K562 (cell line): ENCODE measurements at regions of chr21 and their contacts with region 1.

Region 1: DNA sequence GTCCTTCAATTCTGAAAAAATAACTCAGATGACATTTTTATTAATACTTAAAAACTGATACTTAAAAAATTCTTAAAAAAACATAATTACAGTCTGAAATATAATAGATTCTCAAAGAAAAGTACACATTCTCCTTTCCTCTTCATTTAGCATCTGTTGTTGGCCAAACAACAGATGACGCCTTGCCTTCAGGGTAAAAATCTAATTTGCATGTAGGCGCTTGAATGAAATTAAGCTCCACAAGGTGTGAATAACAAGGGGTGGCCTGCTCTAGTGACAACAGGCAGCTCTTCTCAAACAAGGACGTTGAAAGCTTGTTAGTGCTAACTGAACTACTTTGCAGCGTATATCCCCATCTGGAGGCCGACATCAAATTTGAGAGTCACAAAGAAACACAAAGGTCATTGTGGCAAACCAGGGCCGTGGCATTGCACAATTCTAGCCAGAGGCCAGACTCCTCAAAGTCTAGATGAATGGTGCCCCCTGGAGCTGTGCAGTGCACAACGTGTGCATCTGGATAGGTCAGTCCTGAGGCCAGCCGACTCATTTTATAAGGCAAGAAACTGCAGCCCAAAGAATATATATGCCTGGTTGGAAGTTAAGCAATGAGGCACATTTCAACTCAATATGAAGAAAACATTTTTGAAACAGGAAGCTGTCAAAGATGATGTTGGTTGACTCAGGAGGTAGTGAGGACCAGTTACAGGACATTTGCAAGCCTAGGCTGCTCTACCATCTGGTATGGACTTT is 459.2 kb upstream of the RUNX1 start:
- DNase-seq: peak; percentile 35 to 84 (median 51)
- ATAC-seq: peak; percentile 96
- H3K4me3 ChIP-seq: no peak overlapping the region
- H3K27ac ChIP-seq: no peak overlapping the region
- H3K4me1 ChIP-seq: peaks cover 3 to 43% of the 10 kb centered on the region in 2 experiments; a peak in 4 of 5 replicates
- H3K27me3 ChIP-seq: no peaks in the 10 kb centered on the region; a peak in 1 of 5 replicates
- CTCF ChIP-seq: peak; percentile 76 to 86 (median 81)
- EP300 ChIP-seq: peak; percentile 58
- POLR2A ChIP-seq: no peak
- RAD21 ChIP-seq: peak; percentile 97

Region 2: DNA sequence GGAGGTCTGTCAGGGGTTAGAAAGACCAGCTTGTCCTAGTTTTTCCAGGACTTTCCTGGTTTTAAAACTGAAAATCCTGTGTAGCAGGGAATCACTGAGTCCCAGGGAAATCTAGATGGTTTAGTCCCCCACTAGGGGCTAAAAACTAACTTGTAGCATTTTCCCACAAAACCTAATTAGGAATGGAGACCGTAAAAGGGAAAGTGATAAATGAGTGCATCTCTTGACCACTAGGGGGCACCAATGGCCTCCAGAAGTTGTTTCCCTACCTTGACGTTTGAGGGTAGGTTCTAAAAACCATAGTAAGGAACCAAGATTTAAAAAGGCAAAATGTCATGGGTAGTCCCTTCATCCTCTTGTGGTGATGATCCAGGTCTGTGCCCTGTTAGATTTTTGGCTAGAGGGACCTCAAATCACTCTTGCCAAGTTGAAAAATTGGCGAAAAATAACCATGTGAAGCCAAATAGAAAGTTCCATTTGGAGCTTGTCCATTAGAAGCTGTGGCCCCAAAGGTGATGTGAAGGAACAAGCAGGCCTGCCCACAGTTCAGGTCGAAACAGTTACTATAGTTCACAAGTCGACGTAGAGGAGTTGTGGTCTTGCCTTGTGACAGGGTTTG is 815.0 kb before region 1 on chr21:
- CTCF ChIA-PET with region 1: no interaction called
- POLR2A ChIA-PET with region 1: no interaction called
- in situ Hi-C with region 1: no loop called
- intact Hi-C with region 1: loop called (anchors 2 kb)
- DNase-seq: peak; percentile 74 to 77 (median 75)
- ATAC-seq: peak; percentile 87
- H3K4me3 ChIP-seq: no peak overlapping the region
- H3K27ac ChIP-seq: no peak overlapping the region
- H3K4me1 ChIP-seq: no peaks in the 10 kb centered on the region; a peak in 1 of 5 replicates
- H3K27me3 ChIP-seq: peaks cover 19 to 21% of the 10 kb centered on the region in 2 experiments
- CTCF ChIP-seq: peak; percentile 77 to 93 (median 88)
- EP300 ChIP-seq: no peak
- POLR2A ChIP-seq: no peak
- RAD21 ChIP-seq: peak; percentile 88 to 94

Region 3: DNA sequence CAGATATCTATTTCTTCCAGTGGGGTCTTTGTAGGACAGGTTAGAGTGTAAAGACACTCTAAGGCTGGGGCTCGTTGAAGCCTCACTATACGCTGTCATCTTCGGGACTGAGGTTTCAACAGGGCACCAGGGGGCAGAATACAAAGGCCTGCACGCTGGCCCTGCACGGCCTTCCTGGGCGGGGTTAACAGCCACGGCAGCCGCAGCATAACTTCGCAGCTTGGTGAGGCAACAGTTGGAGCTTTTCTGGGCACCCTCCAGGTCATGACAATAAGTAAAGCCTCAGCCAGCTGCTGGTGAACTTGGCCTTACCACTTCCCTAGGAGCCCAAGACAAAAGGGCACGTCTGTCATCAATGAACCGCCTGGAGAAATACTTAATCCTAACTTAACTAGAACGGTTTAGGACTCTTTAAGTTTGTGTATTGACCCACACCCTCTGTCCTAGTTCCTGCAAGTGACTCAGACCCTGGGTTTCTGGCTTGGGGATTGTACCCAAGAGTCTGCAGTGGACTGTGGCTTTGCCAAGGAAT is 457.0 kb before region 1 on chr21:
- CTCF ChIA-PET with region 1: no interaction called
- POLR2A ChIA-PET with region 1: no interaction called
- in situ Hi-C with region 1: no loop called
- intact Hi-C with region 1: loop called (anchors 10 kb)
- DNase-seq: peak; percentile 82 to 95 (median 88)
- ATAC-seq: peak; percentile 98
- H3K4me3 ChIP-seq: no peak overlapping the region
- H3K27ac ChIP-seq: peak overlapping the region; percentile 70
- H3K4me1 ChIP-seq: peaks cover 18 to 50% of the 10 kb centered on the region in 2 experiments
- H3K27me3 ChIP-seq: no peaks in the 10 kb centered on the region
- CTCF ChIP-seq: peak; percentile 87 to 90 (median 87)
- EP300 ChIP-seq: peak; percentile 55; the same call in 1 of the 2 replicates
- POLR2A ChIP-seq: 0 out of 2 replicates have a peak, but pooled peaks have one; percentile 45
- RAD21 ChIP-seq: peak; percentile 94 to 95

Region 4: GRCh38 chr21:35337573-35337972 is 170.7 kb before region 1 on chr21:
- CTCF ChIA-PET with region 1: no interaction called
- POLR2A ChIA-PET with region 1: no interaction called
- in situ Hi-C with region 1: no loop called
- intact Hi-C with region 1: loop called (anchors 1 kb)
- DNase-seq: no peak
- ATAC-seq: no peak
- H3K4me3 ChIP-seq: no peak overlapping the region
- H3K27ac ChIP-seq: no peak overlapping the region
- H3K4me1 ChIP-seq: peaks cover 6 to 30% of the 10 kb centered on the region in 2 experiments
- H3K27me3 ChIP-seq: no peaks in the 10 kb centered on the region
- CTCF ChIP-seq: no peak
- EP300 ChIP-seq: no peak
- POLR2A ChIP-seq: no peak
- RAD21 ChIP-seq: no peak; a peak in 1 of 4 replicates

Region 5: DNA sequence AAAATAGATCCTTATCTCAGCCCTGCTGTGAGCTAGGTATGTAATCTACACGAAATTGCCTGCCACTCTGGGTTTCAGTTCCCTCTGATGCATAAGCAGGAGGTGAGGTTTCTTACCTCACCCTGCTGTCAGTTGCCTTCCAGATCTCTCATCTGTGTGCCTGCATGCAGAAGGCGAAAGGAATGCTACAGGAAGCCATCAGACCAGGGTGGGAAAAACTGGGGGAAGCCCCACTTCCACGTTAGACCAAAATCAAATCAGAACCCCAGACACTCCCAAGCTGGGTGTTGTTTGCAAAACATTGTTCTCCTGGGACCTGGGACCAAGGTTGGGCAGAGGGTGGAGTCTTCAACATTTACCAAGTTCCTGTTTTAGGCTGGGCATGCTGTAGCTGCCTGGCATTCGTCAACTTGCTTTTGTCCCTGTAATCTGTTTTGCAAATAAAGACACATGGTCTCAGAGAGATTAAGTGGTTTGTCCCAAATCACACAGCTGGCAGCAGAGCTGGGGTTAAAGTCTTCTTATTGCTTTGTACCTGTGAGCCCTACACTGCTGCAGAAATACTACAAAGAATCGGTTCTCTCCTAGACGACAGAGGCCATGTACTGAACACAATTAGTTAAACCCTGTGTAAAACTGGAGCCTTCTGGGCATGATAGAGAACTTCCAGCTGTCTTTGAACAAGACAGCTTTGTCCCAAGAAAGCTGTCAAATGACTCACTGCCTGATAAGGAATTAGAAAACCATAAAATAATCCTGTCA is 69.5 kb before region 1 on chr21:
- CTCF ChIA-PET with region 1: no interaction called
- POLR2A ChIA-PET with region 1: interaction called, 3 read pairs
- in situ Hi-C with region 1: no loop called
- intact Hi-C with region 1: loop called (anchors 5 kb)
- DNase-seq: no peak
- ATAC-seq: no peak
- H3K4me3 ChIP-seq: no peak overlapping the region
- H3K27ac ChIP-seq: no peak overlapping the region
- H3K4me1 ChIP-seq: 0 out of 5 replicates have a peak, but pooled peaks cover 0 to 7% of the 10 kb centered on the region in 2 experiments
- H3K27me3 ChIP-seq: peaks cover 2 to 4% of the 10 kb centered on the region in 2 experiments; a peak in 2 of 5 replicates
- CTCF ChIP-seq: no peak
- EP300 ChIP-seq: no peak
- POLR2A ChIP-seq: no peak
- RAD21 ChIP-seq: no peak